Naive thymus-derived CD4-positive, alpha-beta T cell (primary cell): ENCODE measurements at regions of chr12 and their contacts with region 1.

Region 1: DNA sequence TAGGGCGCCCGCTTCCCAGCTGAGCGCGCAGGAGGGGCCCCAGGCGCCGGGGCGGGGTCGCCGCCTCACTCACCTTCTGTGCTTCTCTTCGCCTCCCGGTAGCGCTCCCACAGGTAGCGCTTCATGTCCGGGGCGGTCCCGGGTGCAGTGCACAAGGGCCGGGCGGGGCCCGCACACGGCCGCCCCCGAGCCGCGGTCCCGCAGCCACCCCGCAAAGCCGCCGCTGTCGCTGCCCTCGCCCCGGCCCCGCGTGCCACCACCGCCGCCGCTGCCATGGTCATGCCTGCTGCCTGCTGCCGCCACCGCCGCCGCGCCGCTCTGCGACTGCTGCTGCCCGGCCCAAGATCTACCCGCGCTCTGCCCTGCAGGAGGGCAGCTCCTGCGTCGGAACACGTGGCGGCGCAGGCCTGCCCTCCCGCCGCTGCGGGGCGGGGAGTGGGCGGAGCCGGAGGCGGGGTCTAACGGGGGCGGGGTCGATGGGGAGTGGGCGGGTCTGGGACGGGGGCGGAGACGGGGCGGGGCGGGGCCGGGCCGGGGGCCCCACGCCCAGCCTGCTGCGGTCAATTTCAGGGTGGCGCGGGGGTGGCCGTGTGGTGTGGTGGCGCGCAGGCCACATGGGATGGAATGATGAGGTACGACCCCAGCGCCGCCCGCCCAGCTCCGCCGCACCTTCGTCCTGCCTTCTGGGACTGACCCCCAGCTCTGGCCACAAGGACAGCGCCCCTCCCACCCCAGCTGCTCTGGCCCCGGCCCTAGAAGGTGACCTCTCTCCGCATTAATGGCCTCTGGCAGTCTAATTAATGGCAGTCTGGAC is at the start of gene NT5DC3:
- DNase-seq: peak; percentile 77 to 93 (median 87)
- ATAC-seq: peak; percentile 98
- H3K4me3 ChIP-seq: peak within 1 kb of the TSS; percentile 68
- H3K4me3 Mint-ChIP-seq: peak within 1 kb of the TSS; percentile 80 to 92 (median 86)
- H3K27ac ChIP-seq: peak within 1 kb of the TSS; percentile 55
- H3K27ac Mint-ChIP-seq: peak within 1 kb of the TSS in 8 of 9 donors; percentile 61 to 89 (median 76)
- H3K4me1 ChIP-seq: peaks cover 7 to 9% of the 10 kb centered on the region in 2 donors
- H3K4me1 Mint-ChIP-seq: peaks cover 5 to 26% (median 18%) of the 10 kb centered on the region in 7 donors
- H3K27me3 ChIP-seq: no peaks in the 10 kb centered on the region
- H3K27me3 Mint-ChIP-seq: peaks cover 0 to 35% (median 0%) of the 10 kb centered on the region in 5 donors
- total RNA-seq, gene NT5DC3: 3.9 to 5.0 (median 4.5) TPM

Region 2: GRCh38 chr12:102119674-102120563 is 1721.2 kb before region 1 on chr12 and contains the starts of genes NUP37 and PARPBP:
- CTCF ChIA-PET with region 1: no interaction called
- POLR2A ChIA-PET with region 1: no interaction called
- intact Hi-C with region 1: loop called in 1 of 2 experiments (anchors 10 kb)
- DNase-seq: peak; percentile 87 to 94 (median 91)
- ATAC-seq: peak; percentile 98
- H3K4me3 ChIP-seq: peak within 1 kb of the TSS; percentile 93
- H3K4me3 Mint-ChIP-seq: peak within 1 kb of the TSS; percentile 88 to 98 (median 93)
- H3K27ac ChIP-seq: peak within 1 kb of the TSS; percentile 91
- H3K27ac Mint-ChIP-seq: peak within 1 kb of the TSS; percentile 86 to 97 (median 92)
- H3K4me1 ChIP-seq: peaks cover 9 to 14% of the 10 kb centered on the region in 2 donors
- H3K4me1 Mint-ChIP-seq: peaks cover 14 to 49% (median 27%) of the 10 kb centered on the region in 7 donors
- H3K27me3 ChIP-seq: no peaks in the 10 kb centered on the region
- H3K27me3 Mint-ChIP-seq: no peaks in the 10 kb centered on the region
- total RNA-seq, gene NUP37: 11.9 to 47.5 (median 18.5) TPM
- total RNA-seq, gene PARPBP: 1.1 to 21.5 (median 1.5) TPM

Region 3: GRCh38 chr12:103956516-103957027 is 115.5 kb after region 1 on chr12:
- CTCF ChIA-PET with region 1: no interaction called
- POLR2A ChIA-PET with region 1: interaction called, 3 read pairs
- intact Hi-C with region 1: loop called (anchors 1 kb)
- DNase-seq: peak in 3 of 9 donors; percentile 4 to 7 (median 5)
- ATAC-seq: no peak
- H3K4me3 ChIP-seq: peak overlapping the region; percentile 91
- H3K4me3 Mint-ChIP-seq: peak overlapping the region; percentile 95 to 100 (median 99)
- H3K27ac ChIP-seq: peak overlapping the region; percentile 73
- H3K27ac Mint-ChIP-seq: peak overlapping the region; percentile 93 to 99 (median 98)
- H3K4me1 ChIP-seq: peaks cover 13 to 17% of the 10 kb centered on the region in 2 donors
- H3K4me1 Mint-ChIP-seq: peaks cover 25 to 58% (median 43%) of the 10 kb centered on the region in 7 donors
- H3K27me3 ChIP-seq: no peaks in the 10 kb centered on the region
- H3K27me3 Mint-ChIP-seq: no peaks in the 10 kb centered on the region

Region 4: GRCh38 chr12:104026841-104027599 is 185.9 kb after region 1 on chr12:
- CTCF ChIA-PET with region 1: no interaction called
- POLR2A ChIA-PET with region 1: no interaction called
- intact Hi-C with region 1: no loop called
- DNase-seq: no peak
- ATAC-seq: no peak
- H3K4me3 ChIP-seq: no peak overlapping the region
- H3K4me3 Mint-ChIP-seq: no peak overlapping the region
- H3K27ac ChIP-seq: no peak overlapping the region
- H3K27ac Mint-ChIP-seq: no peak overlapping the region
- H3K4me1 ChIP-seq: no peaks in the 10 kb centered on the region
- H3K4me1 Mint-ChIP-seq: no peaks in the 10 kb centered on the region
- H3K27me3 ChIP-seq: no peaks in the 10 kb centered on the region
- H3K27me3 Mint-ChIP-seq: peaks cover 0 to 30% (median 10%) of the 10 kb centered on the region in 5 donors

Region 5: GRCh38 chr12:104064031-104064822 is 223.1 kb after region 1 on chr12 and contains the start of gene HCFC2:
- CTCF ChIA-PET with region 1: no interaction called
- POLR2A ChIA-PET with region 1: no interaction called
- intact Hi-C with region 1: loop called (anchors 1 to 5 kb)
- DNase-seq: peak; percentile 77 to 93 (median 83)
- ATAC-seq: peak; percentile 99
- H3K4me3 ChIP-seq: peak within 1 kb of the TSS; percentile 95
- H3K4me3 Mint-ChIP-seq: peak within 1 kb of the TSS; percentile 88 to 97 (median 94)
- H3K27ac ChIP-seq: peak within 1 kb of the TSS; percentile 79
- H3K27ac Mint-ChIP-seq: peak within 1 kb of the TSS; percentile 71 to 96 (median 90)
- H3K4me1 ChIP-seq: peaks cover 5 to 9% of the 10 kb centered on the region in 2 donors
- H3K4me1 Mint-ChIP-seq: peaks cover 13 to 31% (median 21%) of the 10 kb centered on the region in 7 donors
- H3K27me3 ChIP-seq: no peaks in the 10 kb centered on the region
- H3K27me3 Mint-ChIP-seq: peaks cover 5 to 27% (median 13%) of the 10 kb centered on the region in 5 donors
- total RNA-seq, gene HCFC2: 11.4 to 20.2 (median 16.2) TPM

Region 6: GRCh38 chr12:104215638-104216297 is 374.7 kb after region 1 on chr12 and contains the start of gene TXNRD1:
- CTCF ChIA-PET with region 1: no interaction called
- POLR2A ChIA-PET with region 1: no interaction called
- intact Hi-C with region 1: loop called in 1 of 2 experiments (anchors 5 kb)
- DNase-seq: peak; percentile 70 to 84 (median 81)
- ATAC-seq: peak; percentile 97
- H3K4me3 ChIP-seq: peak within 1 kb of the TSS; percentile 69
- H3K4me3 Mint-ChIP-seq: peak within 1 kb of the TSS; percentile 79 to 89 (median 84)
- H3K27ac ChIP-seq: peak within 1 kb of the TSS; percentile 64
- H3K27ac Mint-ChIP-seq: peak within 1 kb of the TSS; percentile 64 to 86 (median 72)
- H3K4me1 ChIP-seq: peaks cover 0 to 5% of the 10 kb centered on the region in 2 donors
- H3K4me1 Mint-ChIP-seq: peaks cover 15 to 41% (median 26%) of the 10 kb centered on the region in 7 donors
- H3K27me3 ChIP-seq: no peaks in the 10 kb centered on the region
- H3K27me3 Mint-ChIP-seq: peaks cover 0 to 8% (median 0%) of the 10 kb centered on the region in 5 donors
- total RNA-seq, gene TXNRD1: 19.1 to 73.5 (median 41.7) TPM

Region 7: GRCh38 chr12:104986022-104986941 is 1145.2 kb after region 1 on chr12 and contains the start of gene NOPCHAP1:
- CTCF ChIA-PET with region 1: no interaction called
- POLR2A ChIA-PET with region 1: no interaction called
- intact Hi-C with region 1: loop called in 1 of 2 experiments (anchors 2 kb)
- DNase-seq: peak; percentile 64 to 84 (median 78)
- ATAC-seq: peak; percentile 100
- H3K4me3 ChIP-seq: peak within 1 kb of the TSS; percentile 91
- H3K4me3 Mint-ChIP-seq: peak within 1 kb of the TSS; percentile 90 to 95 (median 94)
- H3K27ac ChIP-seq: peak within 1 kb of the TSS; percentile 73
- H3K27ac Mint-ChIP-seq: peak within 1 kb of the TSS; percentile 63 to 87 (median 74)
- H3K4me1 ChIP-seq: peaks cover 12 to 13% of the 10 kb centered on the region in 2 donors
- H3K4me1 Mint-ChIP-seq: peaks cover 19 to 47% (median 37%) of the 10 kb centered on the region in 7 donors
- H3K27me3 ChIP-seq: no peaks in the 10 kb centered on the region
- H3K27me3 Mint-ChIP-seq: peaks cover 0 to 13% (median 5%) of the 10 kb centered on the region in 5 donors
- total RNA-seq, gene NOPCHAP1: 10.5 to 18.0 (median 15.2) TPM